Left colon (tissue), 2 donors: ENCODE measurements at regions of chr1 and their contacts with region 1.

Region 1: GRCh38 chr1:233240829-233241682 is 54.5 kb downstream of the PCNX2 start:
- DNase-seq: peak; percentile 64 to 72
- ATAC-seq: peak; percentile 64

Region 2: DNA sequence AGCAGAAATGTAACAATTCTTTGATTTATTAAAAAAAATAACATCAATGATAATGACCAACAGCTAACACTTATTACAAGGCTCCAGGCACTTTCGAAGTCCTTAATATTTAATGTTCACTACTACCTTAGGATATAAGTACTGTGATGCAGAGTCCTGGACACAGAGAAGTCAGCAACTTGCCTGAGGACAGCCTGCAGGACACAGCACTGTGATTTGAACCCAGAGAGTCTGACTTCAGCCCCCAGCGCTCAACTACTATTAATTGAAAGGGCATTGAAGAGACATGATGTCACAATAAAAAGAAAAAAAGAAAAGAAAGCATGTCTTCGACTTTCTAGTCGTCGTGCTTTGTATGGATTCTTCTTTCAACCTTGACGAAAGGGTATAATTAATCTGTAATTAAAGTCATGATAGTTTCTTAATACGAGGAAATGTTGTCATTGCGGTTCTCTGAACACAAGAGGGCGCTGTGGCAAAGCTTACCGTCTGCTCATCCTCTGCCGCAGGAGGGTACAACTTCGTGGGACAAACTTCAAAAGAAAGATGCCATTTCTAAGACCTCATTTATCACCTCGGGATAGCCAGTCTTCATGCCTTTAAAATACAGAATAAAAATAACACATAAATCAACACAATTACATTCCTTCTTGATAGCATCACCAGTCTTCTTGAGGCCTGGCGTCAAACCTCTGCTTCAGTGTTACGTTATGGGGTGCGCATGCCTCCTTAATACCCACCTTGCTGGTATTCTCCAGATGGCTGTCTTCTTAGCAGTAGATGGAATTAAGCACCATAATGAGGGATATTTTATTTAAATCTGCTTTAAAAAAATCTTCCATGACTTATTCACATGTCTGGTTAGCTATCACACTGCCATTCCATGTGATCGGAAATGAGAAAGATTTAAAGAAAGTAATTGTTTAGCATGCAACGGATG is 1374.4 kb before region 1 on chr1:
- intact Hi-C with region 1: loop called in 1 of 2 experiments (anchors 10 kb)
- DNase-seq: peak in 1 of 2 donors; percentile 57
- ATAC-seq: peak; percentile 37

Region 3: DNA sequence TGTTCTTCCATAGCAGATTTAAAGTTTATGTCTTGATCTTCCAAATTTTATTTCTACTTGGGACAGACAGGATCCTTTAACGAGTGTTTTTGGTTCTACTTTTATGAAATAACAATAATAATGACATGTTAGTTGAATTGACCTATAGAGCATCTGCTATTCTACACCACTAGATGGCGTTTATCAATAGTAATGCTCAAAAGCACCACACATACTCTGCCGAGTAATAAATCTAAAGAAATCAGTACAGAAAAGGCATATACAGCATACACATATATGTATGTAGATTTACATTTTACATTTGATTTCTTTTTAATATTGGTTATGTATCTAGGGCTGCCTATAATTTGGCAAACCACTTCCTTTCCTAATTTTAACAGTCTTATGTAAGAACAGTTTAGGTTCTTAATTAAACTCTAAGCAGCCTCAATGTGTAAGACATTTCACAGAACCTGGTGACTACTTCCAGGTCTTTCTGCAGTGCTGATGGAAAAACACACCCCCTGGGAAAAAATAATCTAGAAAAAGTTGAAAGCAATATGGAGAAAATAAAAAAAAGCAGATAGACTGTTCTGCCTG is 605.2 kb before region 1 on chr1:
- intact Hi-C with region 1: loop called in 1 of 2 experiments (anchors 5 kb)
- DNase-seq: no peak
- ATAC-seq: peak; percentile 40

Region 4: GRCh38 chr1:233005703-233006102 is 235.4 kb before region 1 on chr1:
- intact Hi-C with region 1: no loop called
- DNase-seq: no peak
- ATAC-seq: no peak